Activated naive CD4-positive, alpha-beta T cell treated with anti-CD3 and anti-CD28 coated beads for 36 hours (primary cell): ENCODE measurements at regions of chr1 and their contacts with region 1.

Region 1: GRCh38 chr1:42576935-42577334 is 81.3 kb upstream of the PPIH start:
- DNase-seq: no peak
- H3K4me3 Mint-ChIP-seq: no peak overlapping the region
- H3K27ac Mint-ChIP-seq: no peak overlapping the region
- H3K4me1 Mint-ChIP-seq: no peaks in the 10 kb centered on the region
- H3K27me3 Mint-ChIP-seq: no peaks in the 10 kb centered on the region

Region 2: DNA sequence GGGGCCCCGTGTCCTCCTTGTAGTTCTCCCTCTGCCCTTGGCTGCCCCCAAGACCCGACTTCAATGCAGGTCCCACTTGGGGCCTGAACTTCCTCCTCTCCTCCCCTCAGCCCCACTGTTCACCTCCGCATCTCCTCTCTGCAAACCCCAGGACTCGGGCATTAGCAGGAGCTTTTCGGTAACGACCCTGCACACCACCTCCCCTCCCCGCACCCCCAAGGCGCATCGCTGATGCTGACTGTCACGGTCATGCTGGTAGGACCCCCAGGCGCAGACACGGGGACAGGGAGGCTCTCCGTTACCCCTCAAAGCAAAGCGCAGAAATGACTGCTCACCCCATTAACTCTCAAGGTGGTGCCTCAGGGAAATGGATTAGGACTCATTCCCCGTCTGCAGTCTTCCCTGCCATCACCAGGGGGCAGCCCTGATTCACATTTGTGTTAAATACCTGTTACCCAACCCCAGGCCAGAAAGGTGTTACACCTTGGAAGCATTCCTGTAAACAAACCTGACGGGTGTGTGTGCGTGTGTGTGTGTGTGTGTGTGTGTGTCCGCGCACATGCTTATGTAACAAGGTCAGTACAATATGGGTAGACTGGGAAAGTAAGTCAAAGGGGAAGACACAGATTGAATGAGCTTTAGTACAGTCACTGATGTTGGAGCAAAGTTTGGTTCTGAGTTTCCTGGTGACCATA is 430.2 kb before region 1 on chr1:
- CTCF ChIA-PET with region 1: no interaction called
- intact Hi-C with region 1: loop called (anchors 5 kb)
- DNase-seq: peak; percentile 87
- H3K4me3 Mint-ChIP-seq: no peak overlapping the region
- H3K27ac Mint-ChIP-seq: no peak overlapping the region
- H3K4me1 Mint-ChIP-seq: peaks cover 7% of the 10 kb centered on the region
- H3K27me3 Mint-ChIP-seq: peaks cover 13% of the 10 kb centered on the region

Region 3: DNA sequence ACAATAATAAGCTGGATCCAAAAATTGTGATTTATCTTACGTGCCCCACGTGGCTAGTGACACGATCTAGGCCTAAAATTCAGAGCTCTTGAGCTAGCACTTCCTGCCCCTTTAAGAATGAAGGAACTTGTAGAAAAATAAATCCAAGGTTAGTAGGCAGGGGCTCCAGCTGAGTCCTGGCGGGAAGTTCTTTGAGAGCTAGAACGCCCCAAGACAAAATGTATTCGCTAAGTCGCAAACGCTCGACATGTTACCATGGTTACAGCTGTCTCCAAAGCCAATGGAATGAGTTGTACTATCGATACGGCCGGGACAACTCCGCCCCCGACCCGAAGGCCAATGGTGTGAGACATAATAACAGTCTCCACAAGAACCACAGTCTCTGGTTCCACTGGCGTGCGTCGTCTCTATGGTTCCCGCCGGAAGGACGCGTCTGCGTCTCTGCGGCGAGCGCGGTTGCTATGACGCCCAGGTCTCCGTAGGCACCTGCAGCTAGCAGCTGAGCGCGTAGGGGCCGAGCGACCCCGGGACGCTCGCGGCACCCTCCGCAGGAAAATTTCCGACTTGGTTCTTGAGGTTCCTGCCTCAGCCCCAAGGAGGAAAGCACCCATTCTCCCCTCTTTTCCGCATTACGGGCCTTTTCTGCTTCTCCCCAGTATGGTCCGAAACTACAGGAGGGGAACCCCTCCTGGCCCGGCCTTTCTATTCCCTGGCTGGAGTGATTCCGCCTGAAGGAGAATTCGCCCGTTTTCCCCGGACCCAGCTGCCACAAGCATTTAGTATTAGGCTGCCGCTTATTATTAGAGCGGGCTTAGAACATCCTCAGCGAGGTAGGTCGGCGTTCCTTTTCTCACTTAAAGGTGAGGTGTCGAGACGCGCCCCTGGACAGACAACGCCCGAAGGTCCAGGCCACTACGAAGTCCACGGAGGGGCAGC is 113.8 kb before region 1 on chr1 and contains the start of gene CCDC30:
- CTCF ChIA-PET with region 1: no interaction called
- intact Hi-C with region 1: no loop called
- DNase-seq: peak; percentile 97
- H3K4me3 Mint-ChIP-seq: peak within 1 kb of the TSS; percentile 77
- H3K27ac Mint-ChIP-seq: peak within 1 kb of the TSS; percentile 34
- H3K4me1 Mint-ChIP-seq: peaks cover 32% of the 10 kb centered on the region
- H3K27me3 Mint-ChIP-seq: no peaks in the 10 kb centered on the region
- total RNA-seq, gene CCDC30: 1.4 to 2.1 TPM

Region 4: GRCh38 chr1:42646056-42646455 is 69.1 kb after region 1 on chr1:
- CTCF ChIA-PET with region 1: no interaction called
- intact Hi-C with region 1: loop called (anchors 10 kb)
- DNase-seq: no peak
- H3K4me3 Mint-ChIP-seq: no peak overlapping the region
- H3K27ac Mint-ChIP-seq: no peak overlapping the region
- H3K4me1 Mint-ChIP-seq: no peaks in the 10 kb centered on the region
- H3K27me3 Mint-ChIP-seq: no peaks in the 10 kb centered on the region

Region 5: DNA sequence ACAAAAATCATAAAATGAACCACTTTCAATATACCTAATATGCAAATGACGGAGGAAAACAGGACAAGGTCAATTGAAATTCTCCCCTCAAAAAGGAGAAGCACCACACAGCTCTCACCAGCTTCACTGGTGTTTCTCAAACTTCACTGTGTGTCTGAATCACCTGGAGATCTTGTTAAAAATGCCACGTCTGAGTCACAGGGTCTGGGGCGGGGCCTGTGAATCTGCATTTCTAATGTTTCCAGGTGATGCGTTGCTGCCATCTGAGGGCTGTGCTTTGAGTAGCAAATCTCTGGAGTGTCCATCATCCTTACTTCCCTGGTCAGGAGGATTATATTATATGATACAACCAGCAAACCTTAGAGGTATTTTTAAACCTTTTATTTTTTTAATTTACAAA is 154.1 kb after region 1 on chr1:
- CTCF ChIA-PET with region 1: interaction called, 3 read pairs
- intact Hi-C with region 1: loop called (anchors 1 kb)
- DNase-seq: peak; percentile 87
- H3K4me3 Mint-ChIP-seq: no peak overlapping the region
- H3K27ac Mint-ChIP-seq: no peak overlapping the region
- H3K4me1 Mint-ChIP-seq: peaks cover 3% of the 10 kb centered on the region
- H3K27me3 Mint-ChIP-seq: no peaks in the 10 kb centered on the region

Region 6: GRCh38 chr1:42747125-42747524 is 170.2 kb after region 1 on chr1:
- CTCF ChIA-PET with region 1: interaction called, 9 read pairs
- intact Hi-C with region 1: loop called (anchors 1 kb)
- DNase-seq: peak; percentile 53
- H3K4me3 Mint-ChIP-seq: no peak overlapping the region
- H3K27ac Mint-ChIP-seq: no peak overlapping the region
- H3K4me1 Mint-ChIP-seq: no peaks in the 10 kb centered on the region
- H3K27me3 Mint-ChIP-seq: no peaks in the 10 kb centered on the region